Naive thymus-derived CD4-positive, alpha-beta T cell (primary cell): ENCODE measurements at regions of chr7 and their contacts with region 1.

Region 1: GRCh38 chr7:52656098-52656497 is 379.3 kb upstream of the POM121L12 start:
- DNase-seq: no peak
- ATAC-seq: no peak
- H3K4me3 ChIP-seq: no peak overlapping the region
- H3K4me3 Mint-ChIP-seq: no peak overlapping the region
- H3K27ac ChIP-seq: no peak overlapping the region
- H3K27ac Mint-ChIP-seq: no peak overlapping the region
- H3K4me1 ChIP-seq: no peaks in the 10 kb centered on the region
- H3K4me1 Mint-ChIP-seq: no peaks in the 10 kb centered on the region
- H3K27me3 ChIP-seq: no peaks in the 10 kb centered on the region
- H3K27me3 Mint-ChIP-seq: no peaks in the 10 kb centered on the region

Region 2: GRCh38 chr7:52592698-52593097 is 63.4 kb before region 1 on chr7:
- CTCF ChIA-PET with region 1: no interaction called
- POLR2A ChIA-PET with region 1: no interaction called
- intact Hi-C with region 1: loop called in 1 of 2 experiments (anchors 10 kb)
- DNase-seq: no peak
- ATAC-seq: no peak
- H3K4me3 ChIP-seq: no peak overlapping the region
- H3K4me3 Mint-ChIP-seq: no peak overlapping the region
- H3K27ac ChIP-seq: no peak overlapping the region
- H3K27ac Mint-ChIP-seq: no peak overlapping the region
- H3K4me1 ChIP-seq: no peaks in the 10 kb centered on the region
- H3K4me1 Mint-ChIP-seq: no peaks in the 10 kb centered on the region
- H3K27me3 ChIP-seq: no peaks in the 10 kb centered on the region
- H3K27me3 Mint-ChIP-seq: no peaks in the 10 kb centered on the region

Region 3: DNA sequence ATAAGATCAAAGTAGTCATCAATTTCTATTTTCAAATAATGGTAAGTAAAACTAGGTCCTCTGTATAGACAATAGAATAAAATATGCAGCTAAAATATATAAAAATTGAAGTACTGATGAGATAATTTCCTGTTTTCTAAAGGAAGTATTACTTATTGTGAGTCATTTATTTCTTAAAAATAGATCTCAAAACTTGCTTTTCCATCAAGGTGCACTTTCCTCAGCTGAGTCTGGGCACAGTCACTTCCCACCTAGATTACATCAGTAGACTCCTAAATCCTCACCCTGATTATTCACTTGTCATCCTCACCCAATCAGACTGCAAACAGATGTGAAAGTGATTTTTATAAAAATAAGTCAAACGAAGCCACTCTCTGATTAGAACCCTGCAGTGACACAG is 590.9 kb after region 1 on chr7:
- CTCF ChIA-PET with region 1: no interaction called
- POLR2A ChIA-PET with region 1: no interaction called
- intact Hi-C with region 1: no loop called
- DNase-seq: no peak
- ATAC-seq: no peak
- H3K4me3 ChIP-seq: no peak overlapping the region
- H3K4me3 Mint-ChIP-seq: no peak overlapping the region
- H3K27ac ChIP-seq: no peak overlapping the region
- H3K27ac Mint-ChIP-seq: no peak overlapping the region
- H3K4me1 ChIP-seq: no peaks in the 10 kb centered on the region
- H3K4me1 Mint-ChIP-seq: no peaks in the 10 kb centered on the region
- H3K27me3 ChIP-seq: no peaks in the 10 kb centered on the region
- H3K27me3 Mint-ChIP-seq: no peaks in the 10 kb centered on the region